Activated naive CD4-positive, alpha-beta T cell treated with anti-CD3 and anti-CD28 coated beads for 36 hours (primary cell): ENCODE measurements at regions of chr17 and their contacts with region 1.

Region 1: GRCh38 chr17:17356149-17356930 is 53.2 kb downstream of the NT5M start:
- DNase-seq: peak; percentile 83
- H3K4me3 Mint-ChIP-seq: no peak overlapping the region
- H3K27ac Mint-ChIP-seq: no peak overlapping the region
- H3K4me1 Mint-ChIP-seq: no peaks in the 10 kb centered on the region
- H3K27me3 Mint-ChIP-seq: no peaks in the 10 kb centered on the region

Region 2: GRCh38 chr17:17206913-17207335 is 149.4 kb before region 1 on chr17:
- CTCF ChIA-PET with region 1: no interaction called
- intact Hi-C with region 1: no loop called
- DNase-seq: no peak
- H3K4me3 Mint-ChIP-seq: peak overlapping the region; percentile 50
- H3K27ac Mint-ChIP-seq: no peak overlapping the region
- H3K4me1 Mint-ChIP-seq: peaks cover 27% of the 10 kb centered on the region
- H3K27me3 Mint-ChIP-seq: no peaks in the 10 kb centered on the region

Region 3: GRCh38 chr17:17237026-17237799 is 119.1 kb before region 1 on chr17 and contains the start of gene FLCN:
- CTCF ChIA-PET with region 1: no interaction called
- intact Hi-C with region 1: no loop called
- DNase-seq: peak; percentile 88
- H3K4me3 Mint-ChIP-seq: peak within 1 kb of the TSS; percentile 91
- H3K27ac Mint-ChIP-seq: peak within 1 kb of the TSS; percentile 95
- H3K4me1 Mint-ChIP-seq: peaks cover 31% of the 10 kb centered on the region
- H3K27me3 Mint-ChIP-seq: no peaks in the 10 kb centered on the region
- total RNA-seq, gene FLCN: 17.5 to 18.4 TPM

Region 4: GRCh38 chr17:17280613-17281549 is 75.5 kb before region 1 on chr17 and contains the start of gene COPS3:
- CTCF ChIA-PET with region 1: no interaction called
- intact Hi-C with region 1: no loop called
- DNase-seq: peak; percentile 99
- H3K4me3 Mint-ChIP-seq: peak within 1 kb of the TSS; percentile 94
- H3K27ac Mint-ChIP-seq: peak within 1 kb of the TSS; percentile 88
- H3K4me1 Mint-ChIP-seq: peaks cover 39% of the 10 kb centered on the region
- H3K27me3 Mint-ChIP-seq: no peaks in the 10 kb centered on the region
- total RNA-seq, gene COPS3: 103 to 104 TPM

Region 5: DNA sequence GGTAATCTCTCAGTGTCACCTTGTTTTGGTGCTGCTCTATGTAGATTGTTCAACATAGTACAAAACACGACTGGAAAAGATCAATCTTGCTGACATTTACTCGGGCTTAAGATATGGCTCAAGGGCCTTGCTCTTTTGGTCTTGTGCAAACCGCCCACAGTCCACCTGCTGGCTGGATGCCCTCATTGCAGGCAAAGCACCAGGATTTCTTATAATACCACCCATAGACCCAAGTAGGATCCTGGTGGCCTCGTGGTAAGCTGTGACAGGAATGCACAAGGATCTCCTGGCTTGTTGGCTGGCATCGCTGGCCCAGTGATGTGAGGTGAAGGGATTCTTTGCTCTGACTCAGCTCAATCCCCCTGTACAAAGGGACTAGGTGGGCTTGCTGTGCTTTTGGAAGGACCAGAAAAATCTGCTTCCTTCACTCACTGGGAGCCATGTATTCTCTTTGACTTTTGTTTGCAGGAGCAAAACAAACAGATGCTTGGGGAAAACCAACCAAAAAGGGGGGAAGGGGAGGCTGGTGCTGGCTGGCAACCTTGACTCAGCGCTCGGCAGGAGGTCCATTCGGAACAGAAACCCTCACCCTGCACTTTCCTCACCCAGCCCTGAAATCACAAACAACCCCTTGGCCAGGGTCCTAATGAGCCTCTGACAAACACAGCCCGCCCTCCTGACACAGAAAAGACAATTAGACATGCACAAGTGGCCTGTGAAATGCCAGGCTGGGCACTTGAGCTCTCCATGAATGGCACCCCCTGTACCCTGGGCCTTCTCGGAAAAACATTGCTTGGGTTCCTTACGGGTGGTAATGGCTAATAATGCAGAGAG is 83.9 kb after region 1 on chr17:
- CTCF ChIA-PET with region 1: interaction called, 11 read pairs
- intact Hi-C with region 1: loop called (anchors 1 kb)
- DNase-seq: peak; percentile 85
- H3K4me3 Mint-ChIP-seq: no peak overlapping the region
- H3K27ac Mint-ChIP-seq: no peak overlapping the region
- H3K4me1 Mint-ChIP-seq: peaks cover 4% of the 10 kb centered on the region
- H3K27me3 Mint-ChIP-seq: no peaks in the 10 kb centered on the region

Region 6: GRCh38 chr17:17445925-17446665 is 89.8 kb after region 1 on chr17:
- CTCF ChIA-PET with region 1: interaction called, 11 read pairs
- intact Hi-C with region 1: no loop called
- DNase-seq: no peak
- H3K4me3 Mint-ChIP-seq: no peak overlapping the region
- H3K27ac Mint-ChIP-seq: no peak overlapping the region
- H3K4me1 Mint-ChIP-seq: no peaks in the 10 kb centered on the region
- H3K27me3 Mint-ChIP-seq: no peaks in the 10 kb centered on the region

Region 7: GRCh38 chr17:17568749-17569195 is 212.4 kb after region 1 on chr17:
- CTCF ChIA-PET with region 1: interaction called, 6 read pairs
- intact Hi-C with region 1: loop called (anchors 1 kb)
- DNase-seq: peak; percentile 78
- H3K4me3 Mint-ChIP-seq: no peak overlapping the region
- H3K27ac Mint-ChIP-seq: no peak overlapping the region
- H3K4me1 Mint-ChIP-seq: peaks cover 2% of the 10 kb centered on the region
- H3K27me3 Mint-ChIP-seq: no peaks in the 10 kb centered on the region